CD8-positive, alpha-beta T cell (primary cell): ENCODE measurements at regions of chr16 and their contacts with region 1.

Region 1: DNA sequence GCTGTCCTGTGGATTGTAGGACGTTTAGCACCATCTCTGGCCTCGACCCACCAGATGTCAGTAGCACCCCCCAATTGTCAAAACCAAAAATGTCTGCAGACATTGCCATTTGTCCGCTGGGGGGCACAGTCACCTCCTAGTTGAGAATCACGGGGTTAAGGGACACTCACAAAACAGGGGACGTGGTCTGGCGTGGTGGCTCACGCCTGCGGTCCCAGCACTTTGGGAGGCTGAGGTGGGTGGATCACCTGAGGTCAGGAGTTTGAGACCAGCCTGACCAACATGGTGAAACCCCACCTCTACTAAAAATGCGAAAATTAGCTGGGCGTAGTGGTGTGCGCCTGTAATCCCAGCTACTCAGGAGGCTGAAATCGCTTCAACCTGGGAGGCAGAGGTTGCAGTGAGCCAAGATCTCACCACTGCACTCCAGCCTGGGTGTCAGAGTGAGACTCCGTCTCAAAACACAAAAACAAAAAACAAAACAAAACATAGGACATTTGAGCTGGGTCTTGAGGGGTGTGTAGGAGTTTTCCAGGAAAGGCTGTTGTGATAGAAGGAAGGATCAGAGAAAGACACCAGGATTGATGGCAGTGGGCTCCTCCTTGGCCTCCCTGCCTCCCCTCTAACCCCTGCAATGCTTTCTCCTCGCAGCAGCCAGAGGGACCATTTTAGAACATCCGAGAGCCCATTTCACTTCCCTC is 171.8 kb upstream of the GSE1 start:
- DNase-seq: peak in 4 of 9 experiments; percentile 25 to 57 (median 38)
- ATAC-seq: no peak
- H3K4me3 ChIP-seq: no peak overlapping the region
- H3K4me3 Mint-ChIP-seq: no peak overlapping the region
- H3K27ac ChIP-seq: no peak overlapping the region
- H3K27ac Mint-ChIP-seq: no peak overlapping the region
- H3K4me1 ChIP-seq: peaks cover 14% of the 10 kb centered on the region
- H3K4me1 Mint-ChIP-seq: peaks cover 12% of the 10 kb centered on the region
- H3K27me3 ChIP-seq: no peaks in the 10 kb centered on the region
- H3K27me3 Mint-ChIP-seq: no peaks in the 10 kb centered on the region
- CTCF ChIP-seq: no peak

Region 2: GRCh38 chr16:85420501-85421337 is 20.6 kb before region 1 on chr16:
- CTCF ChIA-PET with region 1: interaction called, 12 read pairs
- POLR2A ChIA-PET with region 1: no interaction called
- intact Hi-C with region 1: no loop called
- DNase-seq: peak; percentile 60 to 87 (median 72)
- ATAC-seq: peak; percentile 91
- H3K4me3 ChIP-seq: no peak overlapping the region
- H3K4me3 Mint-ChIP-seq: no peak overlapping the region
- H3K27ac ChIP-seq: no peak overlapping the region
- H3K27ac Mint-ChIP-seq: no peak overlapping the region
- H3K4me1 ChIP-seq: peaks cover 7% of the 10 kb centered on the region
- H3K4me1 Mint-ChIP-seq: peaks cover 2% of the 10 kb centered on the region
- H3K27me3 ChIP-seq: no peaks in the 10 kb centered on the region
- H3K27me3 Mint-ChIP-seq: peaks cover 2% of the 10 kb centered on the region
- CTCF ChIP-seq: peak; percentile 100

Region 3: GRCh38 chr16:85586380-85587104 is 145.2 kb after region 1 on chr16:
- CTCF ChIA-PET with region 1: no interaction called
- POLR2A ChIA-PET with region 1: no interaction called
- intact Hi-C with region 1: no loop called
- DNase-seq: no peak
- ATAC-seq: no peak
- H3K4me3 ChIP-seq: no peak overlapping the region
- H3K4me3 Mint-ChIP-seq: no peak overlapping the region
- H3K27ac ChIP-seq: no peak overlapping the region
- H3K27ac Mint-ChIP-seq: no peak overlapping the region
- H3K4me1 ChIP-seq: peaks cover 18% of the 10 kb centered on the region
- H3K4me1 Mint-ChIP-seq: peaks cover 26% of the 10 kb centered on the region
- H3K27me3 ChIP-seq: no peaks in the 10 kb centered on the region
- H3K27me3 Mint-ChIP-seq: no peaks in the 10 kb centered on the region
- CTCF ChIP-seq: no peak